T-cell (primary cell): ENCODE measurements at regions of chr17 and their contacts with region 1.

Region 1: DNA sequence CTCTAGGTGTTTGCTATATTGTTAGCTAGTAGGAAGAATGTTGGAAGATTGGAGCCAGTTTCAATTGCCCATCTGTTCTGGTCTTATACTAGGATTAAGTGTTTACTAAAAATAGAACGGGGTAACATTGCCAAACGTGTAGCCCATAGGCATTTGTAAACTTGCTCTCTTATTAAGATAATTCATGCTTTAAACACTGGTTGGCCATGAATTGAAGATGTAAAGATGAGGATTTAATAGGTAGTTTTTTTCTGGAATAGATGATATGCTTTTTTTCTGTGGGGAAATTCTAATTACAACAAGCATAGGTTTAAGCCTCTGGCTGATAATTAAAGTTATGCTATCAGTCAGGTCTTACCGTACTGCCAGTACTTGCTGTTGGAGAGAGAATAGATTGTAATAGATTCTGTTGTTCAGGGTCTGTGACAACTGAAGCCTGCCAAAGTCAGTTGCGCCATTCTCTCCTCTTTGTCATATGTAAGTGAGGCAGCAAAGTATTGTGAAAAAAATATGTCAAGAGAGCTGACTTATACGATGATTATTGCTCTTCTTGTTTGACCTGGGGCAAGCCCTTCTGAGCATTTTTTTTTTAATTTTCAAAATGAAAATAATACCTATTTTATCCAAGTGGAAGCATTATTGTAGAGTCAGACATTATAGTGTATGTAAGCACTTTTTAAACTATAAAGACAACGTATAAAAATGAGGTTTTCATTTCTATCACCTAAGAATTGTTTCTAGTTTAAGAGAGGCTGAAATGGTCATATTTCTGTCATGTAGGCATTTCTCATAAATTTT is 67.0 kb downstream of the PPM1E start:
- DNase-seq: no peak
- ATAC-seq: no peak
- H3K4me3 ChIP-seq: no peak overlapping the region
- H3K4me3 Mint-ChIP-seq: no peak overlapping the region
- H3K27ac ChIP-seq: no peak overlapping the region
- H3K27ac Mint-ChIP-seq: no peak overlapping the region
- H3K4me1 ChIP-seq: no peaks in the 10 kb centered on the region
- H3K4me1 Mint-ChIP-seq: no peaks in the 10 kb centered on the region
- H3K27me3 ChIP-seq: peaks cover 0 to 6% of the 10 kb centered on the region in 2 experiments
- H3K27me3 Mint-ChIP-seq: peaks cover 13 to 17% of the 10 kb centered on the region in 2 donors

Region 2: DNA sequence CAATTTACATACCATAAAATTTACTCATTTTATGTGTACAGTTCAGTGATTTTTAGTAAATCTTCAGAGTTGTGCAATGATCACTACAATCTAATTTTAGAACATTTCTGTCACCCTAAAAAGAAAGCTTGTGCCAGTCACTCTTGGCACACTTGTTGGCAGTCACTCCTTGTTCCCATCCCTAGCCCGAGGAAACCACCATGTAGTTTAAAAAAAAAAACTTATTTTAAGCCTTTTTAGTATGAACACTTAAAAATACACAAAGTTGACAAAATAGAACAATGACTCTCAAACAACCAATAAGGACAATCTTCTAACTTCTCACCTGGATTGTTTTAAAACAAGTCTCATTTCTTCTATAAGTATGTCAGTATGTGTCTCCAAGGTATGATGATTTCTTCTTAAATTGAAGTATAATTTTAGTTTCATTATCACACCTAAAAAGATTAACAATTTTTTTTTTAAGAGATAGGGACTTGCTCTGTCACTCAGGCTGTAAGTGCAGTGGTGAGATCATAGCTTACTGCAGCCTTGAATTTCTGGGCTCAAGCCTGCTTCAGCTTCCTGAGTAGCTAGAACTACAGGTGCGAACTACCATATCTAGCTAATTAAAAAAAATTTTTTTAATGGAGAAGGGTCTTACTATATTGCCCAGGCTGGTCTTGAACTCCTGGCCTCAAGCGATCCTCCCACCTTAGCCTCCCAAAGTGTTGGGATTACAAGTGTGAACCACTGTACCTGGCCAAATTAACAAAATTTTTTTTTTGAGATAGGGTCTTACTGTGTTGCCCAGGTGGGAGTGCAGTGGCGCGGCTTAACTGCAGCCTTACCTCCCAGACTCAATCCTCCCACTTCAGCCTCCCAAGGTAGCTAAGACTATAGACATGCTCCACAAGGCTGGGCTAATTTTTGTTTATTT is 13.8 kb before region 1 on chr17:
- CTCF ChIA-PET with region 1: no interaction called
- POLR2A ChIA-PET with region 1: no interaction called
- DNase-seq: no peak
- ATAC-seq: no peak
- H3K4me3 ChIP-seq: no peak overlapping the region
- H3K4me3 Mint-ChIP-seq: no peak overlapping the region
- H3K27ac ChIP-seq: no peak overlapping the region
- H3K27ac Mint-ChIP-seq: no peak overlapping the region
- H3K4me1 ChIP-seq: no peaks in the 10 kb centered on the region
- H3K4me1 Mint-ChIP-seq: no peaks in the 10 kb centered on the region
- H3K27me3 ChIP-seq: peaks cover 0 to 9% of the 10 kb centered on the region in 2 experiments
- H3K27me3 Mint-ChIP-seq: peaks cover 21 to 24% of the 10 kb centered on the region in 2 donors

Region 3: DNA sequence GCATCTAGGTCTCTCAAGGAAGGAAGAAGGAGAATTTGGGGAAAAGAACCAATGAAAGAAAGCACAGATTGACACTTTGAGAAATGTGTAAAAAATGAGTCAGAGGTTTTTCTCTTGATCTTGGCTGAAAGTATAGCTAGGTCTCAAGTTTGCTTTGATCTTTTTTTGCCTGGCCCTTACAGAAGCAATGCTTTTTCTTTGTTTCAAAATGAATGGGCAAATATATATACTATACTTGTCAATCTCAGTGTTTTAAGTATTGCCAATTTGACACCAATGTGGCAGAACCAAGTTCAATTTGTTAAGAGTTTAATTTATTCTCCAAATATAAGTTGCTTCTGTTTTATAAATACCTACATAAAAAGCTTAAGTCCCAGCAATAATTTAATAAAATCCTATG is 52.6 kb after region 1 on chr17:
- CTCF ChIA-PET with region 1: interaction called, 3 to 10 read pairs
- POLR2A ChIA-PET with region 1: no interaction called
- DNase-seq: no peak
- ATAC-seq: no peak
- H3K4me3 ChIP-seq: no peak overlapping the region
- H3K4me3 Mint-ChIP-seq: no peak overlapping the region
- H3K27ac ChIP-seq: no peak overlapping the region
- H3K27ac Mint-ChIP-seq: no peak overlapping the region
- H3K4me1 ChIP-seq: no peaks in the 10 kb centered on the region
- H3K4me1 Mint-ChIP-seq: no peaks in the 10 kb centered on the region
- H3K27me3 ChIP-seq: no peaks in the 10 kb centered on the region
- H3K27me3 Mint-ChIP-seq: peaks cover 0 to 4% of the 10 kb centered on the region in 2 donors